Panc1 (cell line): ENCODE measurements at regions of chr7 and their contacts with region 1.

Region 1: DNA sequence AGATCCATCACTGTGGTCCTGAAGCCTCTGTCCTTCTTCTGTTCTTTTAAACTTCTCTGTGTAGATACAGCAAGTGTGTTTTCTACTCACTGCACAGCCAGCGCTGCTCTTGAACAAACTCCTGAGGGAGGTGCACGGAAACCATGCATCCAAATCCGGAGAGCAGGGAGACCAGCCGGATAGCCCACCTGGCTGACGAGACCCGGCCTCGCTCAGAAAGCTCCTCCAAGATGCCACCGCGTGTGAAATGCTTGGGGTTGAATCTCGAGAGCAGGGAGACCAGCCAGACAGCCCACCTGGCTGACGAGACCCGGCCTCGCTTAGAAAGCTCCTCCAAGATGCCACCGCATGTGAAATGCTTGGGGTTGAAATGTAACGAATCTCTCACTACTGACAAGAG is 602.0 kb downstream of the PTPRN2 start:
- DNase-seq: no peak
- ATAC-seq: no peak
- H3K4me3 ChIP-seq: no peak overlapping the region
- H3K27ac ChIP-seq: no peak overlapping the region
- H3K4me1 ChIP-seq: no peaks in the 10 kb centered on the region
- H3K27me3 ChIP-seq: peaks cover 2% of the 10 kb centered on the region; the same call in 1 of the 2 replicates
- CTCF ChIP-seq: no peak

Region 2: GRCh38 chr7:157830331-157830730 is 155.3 kb before region 1 on chr7:
- CTCF ChIA-PET with region 1: no interaction called
- POLR2A ChIA-PET with region 1: no interaction called
- in situ Hi-C with region 1: no loop called
- intact Hi-C with region 1: no loop called
- DNase-seq: no peak
- ATAC-seq: no peak
- H3K4me3 ChIP-seq: no peak overlapping the region
- H3K27ac ChIP-seq: no peak overlapping the region
- H3K4me1 ChIP-seq: no peaks in the 10 kb centered on the region
- H3K27me3 ChIP-seq: peaks cover 7% of the 10 kb centered on the region
- CTCF ChIP-seq: no peak

Region 3: DNA sequence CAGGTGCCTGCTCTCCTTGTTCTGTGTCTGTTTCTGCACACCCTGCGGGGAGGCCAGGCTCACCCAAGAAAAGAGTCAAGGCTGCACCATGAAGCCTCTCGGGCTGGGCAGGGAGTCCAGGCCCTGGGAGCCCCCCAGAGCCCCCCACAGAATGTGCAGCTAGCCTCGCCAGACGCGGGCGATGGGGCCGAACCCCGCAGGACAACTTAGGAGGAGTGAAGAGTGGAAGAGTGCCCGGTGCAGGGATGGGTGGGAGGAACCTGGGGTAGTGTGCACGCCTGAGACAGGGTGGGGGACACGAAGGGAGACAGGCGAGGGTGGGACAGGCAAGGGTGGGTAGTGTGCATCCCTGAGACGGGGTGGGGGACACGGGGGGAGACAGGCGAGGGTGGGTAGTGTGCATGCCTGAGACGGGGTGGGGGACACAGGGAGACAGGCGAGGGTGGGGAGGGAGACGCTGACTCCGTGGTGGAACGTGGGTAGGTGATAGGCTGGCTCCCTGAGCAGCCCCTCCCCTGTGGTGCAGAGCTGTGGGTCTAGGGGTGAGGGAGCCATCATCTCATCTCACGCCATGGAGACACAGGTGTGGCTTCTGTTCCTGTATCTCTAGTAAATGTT is 33.5 kb before region 1 on chr7:
- CTCF ChIA-PET with region 1: no interaction called
- POLR2A ChIA-PET with region 1: no interaction called
- in situ Hi-C with region 1: no loop called
- intact Hi-C with region 1: no loop called
- DNase-seq: no peak
- ATAC-seq: no peak
- H3K4me3 ChIP-seq: no peak overlapping the region
- H3K27ac ChIP-seq: no peak overlapping the region
- H3K4me1 ChIP-seq: no peaks in the 10 kb centered on the region
- H3K27me3 ChIP-seq: peaks cover 8% of the 10 kb centered on the region
- CTCF ChIP-seq: no peak

Region 4: GRCh38 chr7:157998884-157999552 is 13.4 kb after region 1 on chr7:
- CTCF ChIA-PET with region 1: no interaction called
- POLR2A ChIA-PET with region 1: interaction called, 10 read pairs
- in situ Hi-C with region 1: no loop called
- intact Hi-C with region 1: no loop called
- DNase-seq: no peak
- ATAC-seq: no peak
- H3K4me3 ChIP-seq: no peak overlapping the region
- H3K27ac ChIP-seq: no peak overlapping the region
- H3K4me1 ChIP-seq: peaks cover 4% of the 10 kb centered on the region; the same call in 1 of the 2 replicates
- H3K27me3 ChIP-seq: no peaks in the 10 kb centered on the region
- CTCF ChIP-seq: no peak